Left lung (tissue), 14 donors: ENCODE measurements at regions of chr14 and their contacts with region 1.

Region 1: DNA sequence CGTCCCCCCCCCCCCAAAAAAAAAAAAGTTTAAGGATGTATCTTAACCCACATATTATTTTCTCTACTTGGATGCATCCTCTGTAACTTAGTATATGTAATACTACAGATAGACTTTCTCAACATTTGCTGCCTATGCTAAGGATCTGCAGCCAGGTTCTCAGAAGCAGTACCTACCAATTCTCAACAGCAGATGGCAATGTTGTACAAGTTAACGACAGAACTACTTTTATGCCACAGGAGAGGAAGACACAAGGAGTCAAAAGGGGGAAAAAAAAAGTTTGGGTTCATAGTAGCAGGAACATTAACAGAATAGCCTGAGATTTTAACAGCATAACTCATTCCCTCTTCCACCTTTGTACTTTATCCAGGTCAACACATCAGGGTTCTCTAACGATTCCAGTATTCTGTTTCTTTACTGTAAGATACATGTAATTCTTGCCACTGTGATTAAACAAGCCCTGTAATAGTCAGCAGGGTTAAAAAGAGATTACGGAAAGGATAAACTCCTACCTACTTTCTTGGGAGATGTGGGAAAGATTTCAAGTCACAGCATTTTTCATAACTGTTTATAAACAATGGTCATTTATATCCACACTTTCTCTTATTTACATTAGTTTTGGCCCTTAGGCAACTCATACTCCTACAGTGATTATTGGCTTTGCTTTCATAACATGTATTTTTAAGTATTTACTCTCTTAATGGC is 5.7 kb upstream of the NEK9 start:
- DNase-seq: peak in 2 of 4 donors; percentile 70 to 82
- ATAC-seq: peak; percentile 92
- H3K4me3 ChIP-seq: no peak overlapping the region
- H3K27ac ChIP-seq: peak overlapping the region; percentile 14 to 28
- H3K4me1 ChIP-seq: peaks cover 15 to 24% of the 10 kb centered on the region in 2 donors
- H3K27me3 ChIP-seq: no peaks in the 10 kb centered on the region
- CTCF ChIP-seq: peak; percentile 58 to 87

Region 2: GRCh38 chr14:75497191-75497590 is 364.7 kb after region 1 on chr14:
- intact Hi-C with region 1: loop called in 1 of 2 experiments (anchors 10 kb)
- DNase-seq: no peak
- ATAC-seq: peak; percentile 23
- H3K4me3 ChIP-seq: no peak overlapping the region
- H3K27ac ChIP-seq: no peak overlapping the region
- H3K4me1 ChIP-seq: no peaks in the 10 kb centered on the region
- H3K27me3 ChIP-seq: no peaks in the 10 kb centered on the region
- CTCF ChIP-seq: no peak